Right lobe of liver (tissue), 6 donors: ENCODE measurements at regions of chr2 and their contacts with region 1.

Region 1: DNA sequence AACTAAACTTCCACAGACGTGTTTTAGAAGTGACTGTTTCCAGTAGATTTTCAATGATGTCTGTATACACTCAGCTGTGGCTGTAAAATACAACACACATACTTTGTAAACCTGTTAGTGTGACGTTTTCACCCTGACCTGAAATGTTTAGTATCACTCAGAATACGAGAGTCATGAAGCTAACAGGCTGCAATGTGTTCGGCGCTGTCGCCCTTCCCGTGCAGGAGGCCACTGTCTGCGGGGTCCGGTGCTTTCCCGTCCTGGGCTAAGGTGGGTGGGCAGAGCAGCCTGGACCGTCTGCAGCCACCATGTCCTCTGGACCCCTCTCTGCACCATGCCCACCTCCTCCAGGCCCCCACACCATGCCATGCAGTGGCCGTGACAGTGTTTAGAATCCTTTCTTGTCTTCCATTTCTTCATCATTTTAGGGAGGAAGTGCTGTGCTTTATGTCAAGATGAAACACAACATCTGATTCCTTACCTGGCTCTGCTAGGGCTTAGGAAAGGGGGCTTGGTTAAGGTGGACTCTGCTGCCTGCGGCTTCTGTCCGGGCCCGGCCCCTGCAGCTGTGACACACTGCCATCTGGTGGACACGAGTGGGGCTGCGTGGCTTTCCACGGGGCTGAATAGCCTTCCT is 53.8 kb upstream of the RBM44 start:
- DNase-seq: peak; percentile 76 to 84 (median 78)
- ATAC-seq: peak; percentile 62 to 72 (median 68)
- H3K4me3 ChIP-seq: no peak overlapping the region
- H3K27ac ChIP-seq: peak overlapping the region; percentile 58 to 96 (median 69)
- H3K4me1 ChIP-seq: peaks cover 0 to 43% (median 18%) of the 10 kb centered on the region in 4 donors
- H3K27me3 ChIP-seq: no peaks in the 10 kb centered on the region
- CTCF ChIP-seq: peak; percentile 96 to 99 (median 99)
- POLR2A ChIP-seq: no peak

Region 2: DNA sequence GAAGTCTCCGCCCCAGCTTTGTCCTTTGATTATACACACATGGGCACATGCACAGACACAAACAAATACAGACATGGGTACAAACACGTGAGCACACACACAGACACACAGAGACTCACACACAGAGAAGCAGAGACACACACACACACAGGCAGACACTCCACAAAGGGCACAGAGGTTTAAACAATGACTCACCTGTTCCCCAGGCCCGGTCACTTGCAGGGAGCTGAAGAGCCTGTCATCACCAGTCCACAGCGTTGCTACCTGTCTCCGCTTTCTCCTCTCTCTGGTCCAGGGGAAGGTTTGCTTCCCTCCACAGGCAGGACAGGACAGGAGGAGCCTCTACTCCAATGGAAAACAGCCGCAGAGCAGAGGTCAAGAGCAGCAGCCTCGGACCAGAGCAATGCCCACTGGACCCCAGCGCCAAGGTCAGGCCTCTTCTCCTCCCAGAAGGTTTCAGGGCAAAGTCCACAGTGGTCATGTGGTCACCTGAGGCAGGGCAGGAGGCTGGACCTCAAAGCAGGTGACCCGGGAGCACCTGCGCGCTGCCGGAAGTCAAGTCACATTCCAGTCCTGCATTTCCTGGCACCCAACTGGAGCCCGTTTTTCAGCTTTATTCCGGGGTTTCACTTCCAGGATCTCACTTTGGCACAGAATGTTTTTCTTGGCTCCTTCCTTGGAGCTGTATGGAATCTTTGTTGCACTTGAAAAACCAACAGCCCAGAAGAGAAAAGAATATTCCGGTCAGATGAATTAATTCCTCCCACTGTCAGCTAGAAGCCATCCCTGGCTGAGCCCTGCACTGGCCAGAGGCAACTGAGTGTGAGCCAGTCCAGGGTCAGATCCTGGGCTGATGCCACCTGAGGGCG is 154.2 kb before region 1 on chr2 and contains the start of gene RAB17:
- intact Hi-C with region 1: loop called (anchors 5 to 10 kb)
- DNase-seq: peak; percentile 80 to 96 (median 95)
- ATAC-seq: peak; percentile 62 to 76 (median 69)
- H3K4me3 ChIP-seq: peak within 1 kb of the TSS; percentile 27 to 68 (median 54)
- H3K27ac ChIP-seq: peak within 1 kb of the TSS; percentile 79 to 96 (median 95)
- H3K4me1 ChIP-seq: peaks cover 0 to 50% (median 23%) of the 10 kb centered on the region in 4 donors
- H3K27me3 ChIP-seq: no peaks in the 10 kb centered on the region
- CTCF ChIP-seq: no peak
- POLR2A ChIP-seq: peak; percentile 69
- total RNA-seq, gene RAB17: 57.5 to 129 (median 77.9) TPM

Region 3: GRCh38 chr2:237691908-237692600 is 52.7 kb before region 1 on chr2:
- intact Hi-C with region 1: loop called (anchors 10 kb)
- DNase-seq: peak; percentile 98 to 100 (median 99)
- ATAC-seq: peak; percentile 73 to 91 (median 86)
- H3K4me3 ChIP-seq: peak overlapping the region; percentile 67 to 91 (median 84)
- H3K27ac ChIP-seq: peak overlapping the region; percentile 85 to 97 (median 89)
- H3K4me1 ChIP-seq: peaks cover 0 to 43% (median 2%) of the 10 kb centered on the region in 4 donors
- H3K27me3 ChIP-seq: no peaks in the 10 kb centered on the region
- CTCF ChIP-seq: no peak
- POLR2A ChIP-seq: peak; percentile 93